Heart left ventricle (tissue), 16 donors: ENCODE measurements at regions of chr1 and their contacts with region 1.

Region 1: GRCh38 chr1:248873409-248873992 is 14.6 kb upstream of the ZNF692 start:
- DNase-seq: peak; percentile 92 to 95 (median 93)
- ATAC-seq: peak; percentile 92 to 95 (median 94)
- H3K4me3 ChIP-seq: peak overlapping the region; percentile 56 to 84 (median 70)
- H3K27ac ChIP-seq: peak overlapping the region; percentile 88 to 96 (median 93)
- H3K4me1 ChIP-seq: peaks cover 0 to 12% (median 0%) of the 10 kb centered on the region in 12 donors
- H3K27me3 ChIP-seq: no peaks in the 10 kb centered on the region
- CTCF ChIP-seq: no peak
- POLR2A ChIP-seq: peak in 1 of 2 donors; percentile 50

Region 2: DNA sequence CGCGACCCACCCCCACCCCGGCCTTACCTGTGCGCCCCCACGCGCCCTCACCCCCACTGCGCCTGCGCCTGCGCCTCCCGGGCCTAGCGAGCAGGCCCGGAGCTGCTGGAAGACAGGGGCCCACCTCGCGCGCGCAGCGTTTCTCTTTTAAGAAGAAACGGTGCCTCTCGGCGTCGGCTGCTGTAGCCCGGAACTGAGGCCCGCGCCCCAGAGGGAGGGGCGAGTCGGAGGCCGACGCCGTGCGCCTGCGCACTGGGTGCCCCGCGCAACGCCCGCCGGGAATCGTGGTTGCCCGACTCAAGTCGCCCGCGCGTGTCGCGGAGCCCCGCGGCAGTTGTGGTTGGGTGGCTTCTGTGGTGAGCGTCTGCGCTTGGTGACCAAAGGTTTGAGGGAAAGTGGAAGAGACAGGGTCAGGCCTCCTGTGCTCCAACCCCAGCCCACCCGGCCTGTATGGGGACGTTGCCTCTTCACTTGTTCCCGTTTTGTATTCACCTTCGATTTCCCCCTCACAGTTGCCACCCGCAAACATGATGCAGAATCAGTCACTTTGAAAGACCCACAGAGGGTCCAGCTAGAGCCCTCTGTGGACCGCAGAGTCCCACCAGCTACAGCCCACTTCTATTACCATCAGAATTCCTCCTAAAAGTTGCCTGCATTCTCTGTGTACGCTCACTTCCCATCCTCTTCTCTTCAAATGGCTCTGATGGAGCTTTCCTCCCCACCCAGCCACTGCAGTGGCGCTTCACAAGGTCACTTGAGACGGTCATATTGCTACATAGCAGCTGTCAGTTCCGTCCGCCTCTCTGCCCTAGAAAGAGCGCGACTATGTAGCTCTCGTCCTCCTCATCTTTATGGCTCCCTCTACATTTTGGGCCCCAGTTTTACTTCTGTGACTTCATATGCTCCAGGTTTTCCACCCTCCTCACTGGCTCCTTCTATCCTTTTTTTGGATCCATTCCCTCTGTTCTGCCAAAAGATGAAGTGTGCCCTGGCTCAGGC is 14.3 kb before region 1 on chr1 and contains the start of gene ZNF692:
- intact Hi-C with region 1: loop called in 2 of 10 experiments (anchors 1 to 2 kb)
- DNase-seq: peak; percentile 97 to 99 (median 99)
- ATAC-seq: peak; percentile 89 to 93 (median 92)
- H3K4me3 ChIP-seq: peak within 1 kb of the TSS; percentile 45 to 75 (median 65)
- H3K27ac ChIP-seq: peak within 1 kb of the TSS; percentile 60 to 96 (median 92)
- H3K4me1 ChIP-seq: peaks cover 0 to 43% (median 31%) of the 10 kb centered on the region in 12 donors
- H3K27me3 ChIP-seq: no peaks in the 10 kb centered on the region
- CTCF ChIP-seq: peak in 2 of 12 donors; percentile 2 to 4
- POLR2A ChIP-seq: peak in 1 of 2 donors; percentile 85
- total RNA-seq, gene ZNF692: 7.4 to 19.7 (median 14.8) TPM